Activated naive CD4-positive, alpha-beta T cell treated with anti-CD3 and anti-CD28 coated beads for 36 hours (primary cell): ENCODE measurements at regions of chr3 and their contacts with region 1.

Region 1: GRCh38 chr3:128297401-128298138 is 144.3 kb downstream of the EEFSEC start:
- DNase-seq: no peak
- H3K4me3 Mint-ChIP-seq: no peak overlapping the region
- H3K27ac Mint-ChIP-seq: no peak overlapping the region
- H3K4me1 Mint-ChIP-seq: peaks cover 48% of the 10 kb centered on the region
- H3K27me3 Mint-ChIP-seq: no peaks in the 10 kb centered on the region

Region 2: GRCh38 chr3:128242818-128243601 is 54.6 kb before region 1 on chr3:
- CTCF ChIA-PET with region 1: no interaction called
- intact Hi-C with region 1: loop called (anchors 5 kb)
- DNase-seq: peak; percentile 49
- H3K4me3 Mint-ChIP-seq: no peak overlapping the region
- H3K27ac Mint-ChIP-seq: peak overlapping the region; percentile 79
- H3K4me1 Mint-ChIP-seq: peaks cover 18% of the 10 kb centered on the region
- H3K27me3 Mint-ChIP-seq: no peaks in the 10 kb centered on the region

Region 3: DNA sequence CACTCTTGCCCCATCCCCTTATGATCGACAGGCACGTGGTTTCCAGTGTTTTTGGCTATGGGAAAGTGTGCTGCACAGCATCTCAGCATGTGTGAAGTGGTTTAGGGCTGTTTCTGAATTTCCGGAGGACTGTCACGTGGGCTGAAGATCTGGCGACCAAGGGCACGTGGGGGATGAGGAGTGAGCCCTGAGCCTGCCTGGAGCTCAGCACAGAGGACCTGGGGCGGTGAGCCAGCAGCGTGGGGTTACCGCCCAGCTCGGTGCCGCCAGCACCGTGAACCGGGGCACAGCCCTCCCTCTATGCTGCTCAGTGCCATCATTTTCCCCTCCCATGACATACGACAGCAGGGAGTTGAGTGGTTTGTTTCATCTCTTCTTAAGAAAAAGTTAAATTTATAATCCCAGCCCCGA is 18.9 kb after region 1 on chr3:
- CTCF ChIA-PET with region 1: no interaction called
- intact Hi-C with region 1: loop called (anchors 2 kb)
- DNase-seq: peak; percentile 71
- H3K4me3 Mint-ChIP-seq: peak overlapping the region; percentile 17
- H3K27ac Mint-ChIP-seq: peak overlapping the region; percentile 63
- H3K4me1 Mint-ChIP-seq: peaks cover 52% of the 10 kb centered on the region
- H3K27me3 Mint-ChIP-seq: no peaks in the 10 kb centered on the region